ENCODE measurements at regions of chr5 and their contacts with region 1.

Region 1: DNA sequence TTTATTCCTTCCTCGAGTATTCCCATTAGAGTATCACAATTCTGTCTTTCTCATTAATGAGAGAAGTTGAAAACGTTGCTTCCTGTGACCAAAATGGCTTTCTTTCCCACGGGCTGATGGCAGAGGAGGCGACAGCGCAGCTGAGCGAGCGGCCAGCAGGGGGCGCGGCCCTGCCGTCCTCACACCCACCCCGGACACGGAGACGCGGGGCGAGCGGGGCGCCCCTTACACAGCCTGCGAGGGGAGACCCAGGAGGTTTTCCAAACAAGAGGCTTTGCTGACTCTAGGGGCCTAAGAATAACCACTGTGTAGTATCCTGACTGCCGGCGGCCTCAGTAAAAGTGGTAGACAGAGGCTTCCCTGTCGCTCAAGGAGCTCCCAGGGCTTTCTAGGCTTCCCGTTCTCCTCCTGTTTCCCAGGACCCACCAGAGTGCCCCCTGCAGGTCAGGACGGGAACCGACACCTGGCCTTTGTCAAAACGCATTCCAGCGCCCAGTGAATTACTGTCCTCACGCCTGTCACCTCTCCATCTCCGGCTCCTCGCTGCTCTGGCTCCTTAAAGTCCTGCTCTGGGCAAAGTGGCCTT is 27.3 kb upstream of the FGF1 start:
- DNase-seq: peak; percentile 82
- CTCF ChIP-seq: peak; percentile 97

Region 2: DNA sequence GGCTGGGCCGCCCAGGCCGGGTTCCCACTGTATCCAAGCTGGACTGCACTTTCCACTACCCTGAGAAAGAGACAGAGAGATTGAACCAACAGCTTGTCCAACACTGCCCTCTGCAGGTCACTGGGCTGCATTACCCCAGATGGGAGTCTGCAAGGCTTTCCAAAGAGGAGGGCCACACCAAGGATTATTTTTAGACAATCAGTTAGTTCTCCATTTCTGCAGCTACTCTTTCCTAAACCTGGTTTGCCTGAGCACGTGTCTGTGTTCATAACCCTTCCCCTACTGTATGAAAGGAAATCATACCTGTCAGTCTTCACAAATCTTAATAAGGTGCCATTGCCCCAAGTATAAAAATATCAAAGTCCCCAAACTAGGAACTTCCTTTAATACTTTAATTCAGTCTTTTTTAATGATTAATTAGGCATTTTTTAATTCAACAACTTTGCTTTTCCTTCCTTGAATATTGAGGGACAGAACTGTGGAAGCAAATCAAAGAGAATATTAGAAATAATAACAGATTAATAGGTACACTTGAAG is 14.0 kb before region 1 on chr5:
- CTCF ChIA-PET with region 1: interaction called, 41 read pairs
- POLR2A ChIA-PET with region 1: no interaction called
- DNase-seq: peak; percentile 68
- CTCF ChIP-seq: peak; percentile 94

Region 3: DNA sequence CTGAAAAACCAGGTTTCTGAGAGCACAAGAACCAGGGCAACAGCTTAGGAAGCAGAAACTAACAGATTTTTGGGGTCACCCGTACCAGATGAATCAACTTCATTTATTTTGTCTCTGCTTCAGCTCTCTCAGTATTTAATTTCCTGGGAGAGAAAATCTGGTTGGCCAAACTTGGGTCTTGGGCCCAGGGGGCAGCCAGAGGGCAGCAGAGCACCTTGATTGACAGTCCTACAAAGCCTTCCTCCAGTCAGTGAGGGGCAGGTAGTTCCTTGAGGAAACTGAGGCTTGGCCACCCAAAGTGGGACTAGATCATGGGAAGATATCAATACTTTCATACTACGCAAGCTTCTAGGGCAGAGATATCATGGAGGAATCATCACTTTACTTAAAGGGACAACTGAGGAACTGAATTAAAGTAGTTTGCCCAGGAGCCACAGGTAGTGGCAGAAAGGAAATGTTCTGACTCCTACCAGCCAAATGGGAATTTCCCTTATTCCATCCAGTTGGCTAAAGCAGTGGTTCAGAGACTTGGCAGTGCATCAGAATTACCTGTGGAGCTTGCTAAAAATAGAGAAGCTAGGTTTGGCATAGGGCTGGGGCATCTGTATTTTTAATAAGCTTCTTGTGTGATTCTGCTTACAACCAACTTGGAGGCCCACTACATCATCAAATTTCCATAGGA is 35.5 kb after region 1 on chr5:
- CTCF ChIA-PET with region 1: interaction called, 32 read pairs
- POLR2A ChIA-PET with region 1: no interaction called
- DNase-seq: peak; percentile 37
- CTCF ChIP-seq: peak; percentile 55

Region 4: GRCh38 chr5:142881076-142881783 is 168.0 kb after region 1 on chr5:
- CTCF ChIA-PET with region 1: interaction called, 141 read pairs
- POLR2A ChIA-PET with region 1: no interaction called
- DNase-seq: peak; percentile 40
- CTCF ChIP-seq: no peak

Region 5: DNA sequence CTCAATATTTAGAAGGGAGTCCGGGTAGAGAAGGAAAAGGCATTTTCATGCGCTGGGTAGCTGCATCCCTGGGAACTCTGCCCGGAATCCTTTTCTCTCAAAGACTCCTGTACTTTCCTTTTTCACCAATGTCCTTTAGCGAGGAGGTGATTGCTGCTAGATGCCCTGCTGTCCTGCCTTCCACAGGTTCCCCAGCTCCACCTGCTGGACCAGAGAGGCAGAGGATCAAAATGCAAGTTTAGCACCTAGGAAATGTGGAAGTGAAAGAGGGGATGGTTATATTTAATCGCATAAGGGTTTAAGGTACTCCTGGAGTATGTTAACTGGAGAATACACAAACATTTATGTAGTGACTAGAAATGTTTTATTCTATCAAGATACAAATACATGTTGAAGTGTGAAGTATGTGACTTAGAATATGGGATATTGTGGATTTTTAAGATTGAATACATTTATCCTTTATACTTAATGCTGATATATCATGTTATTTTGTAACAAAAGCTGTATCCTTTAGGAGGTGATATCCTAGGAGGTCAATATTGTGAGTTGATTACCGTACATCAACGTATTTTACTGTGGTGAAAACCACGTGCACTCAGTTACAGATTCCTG is 202.7 kb after region 1 on chr5:
- CTCF ChIA-PET with region 1: interaction called, 19 read pairs
- POLR2A ChIA-PET with region 1: no interaction called
- DNase-seq: peak; percentile 48
- CTCF ChIP-seq: peak; percentile 41

Measured in GM10248 (cell line).